Activated CD4-positive, alpha-beta T cell treated with anti-CD3 and anti-CD28 coated beads, Interleukin-2, amount 10 ng/mL, durations not matched to agents 24 days and 14 days (primary cell): ENCODE measurements at regions of chr1 and their contacts with region 1.

Region 1: GRCh38 chr1:48202030-48202752 is 20.3 kb upstream of the SLC5A9 start:
- DNase-seq: peak; percentile 85
- H3K4me3 Mint-ChIP-seq: no peak overlapping the region
- H3K27ac Mint-ChIP-seq: no peak overlapping the region
- H3K4me1 Mint-ChIP-seq: no peaks in the 10 kb centered on the region
- H3K27me3 Mint-ChIP-seq: no peaks in the 10 kb centered on the region

Region 2: DNA sequence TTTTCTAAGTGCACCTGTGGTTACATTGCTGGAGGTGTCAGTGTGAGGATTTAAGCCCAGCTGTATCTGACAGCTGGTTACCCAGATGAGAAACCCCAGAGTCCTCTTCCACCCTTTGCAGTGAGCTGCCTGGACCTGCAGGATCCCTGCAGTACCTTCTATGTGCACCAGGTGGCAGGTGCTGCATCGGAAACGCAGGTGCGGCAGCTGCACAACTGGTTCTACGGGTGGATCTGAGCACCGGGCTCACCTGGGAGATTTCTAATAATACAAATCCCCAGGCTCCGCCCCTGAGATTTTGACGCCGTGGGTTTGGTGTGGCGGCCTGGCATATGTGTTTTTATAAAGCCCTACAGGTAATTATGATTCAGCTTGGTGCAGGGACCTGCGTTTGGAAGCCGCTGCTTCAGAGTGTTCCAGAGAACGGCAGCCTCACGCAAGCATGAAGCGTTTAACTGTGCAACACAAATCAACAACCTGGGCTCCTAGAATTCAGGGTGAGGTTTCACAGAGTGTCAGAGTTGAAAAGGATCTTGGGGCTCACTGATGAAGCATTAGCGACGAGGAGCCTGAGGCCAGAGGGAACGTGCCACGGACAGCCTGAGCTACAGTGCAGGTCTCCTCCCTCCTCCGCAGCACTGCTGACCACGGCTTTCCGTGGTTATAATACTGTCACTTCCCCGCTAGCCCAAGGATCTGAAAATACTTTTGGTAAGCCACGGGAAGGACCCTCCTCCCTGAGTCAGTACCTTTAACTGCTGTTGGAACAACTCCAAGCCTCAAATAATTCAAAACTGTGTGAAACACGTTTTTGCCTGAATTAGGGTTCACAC is 108.3 kb before region 1 on chr1:
- intact Hi-C with region 1: loop called (anchors 5 kb)
- DNase-seq: peak; percentile 92
- H3K4me3 Mint-ChIP-seq: no peak overlapping the region
- H3K27ac Mint-ChIP-seq: no peak overlapping the region
- H3K4me1 Mint-ChIP-seq: peaks cover 3% of the 10 kb centered on the region
- H3K27me3 Mint-ChIP-seq: peaks cover 21% of the 10 kb centered on the region

Region 3: DNA sequence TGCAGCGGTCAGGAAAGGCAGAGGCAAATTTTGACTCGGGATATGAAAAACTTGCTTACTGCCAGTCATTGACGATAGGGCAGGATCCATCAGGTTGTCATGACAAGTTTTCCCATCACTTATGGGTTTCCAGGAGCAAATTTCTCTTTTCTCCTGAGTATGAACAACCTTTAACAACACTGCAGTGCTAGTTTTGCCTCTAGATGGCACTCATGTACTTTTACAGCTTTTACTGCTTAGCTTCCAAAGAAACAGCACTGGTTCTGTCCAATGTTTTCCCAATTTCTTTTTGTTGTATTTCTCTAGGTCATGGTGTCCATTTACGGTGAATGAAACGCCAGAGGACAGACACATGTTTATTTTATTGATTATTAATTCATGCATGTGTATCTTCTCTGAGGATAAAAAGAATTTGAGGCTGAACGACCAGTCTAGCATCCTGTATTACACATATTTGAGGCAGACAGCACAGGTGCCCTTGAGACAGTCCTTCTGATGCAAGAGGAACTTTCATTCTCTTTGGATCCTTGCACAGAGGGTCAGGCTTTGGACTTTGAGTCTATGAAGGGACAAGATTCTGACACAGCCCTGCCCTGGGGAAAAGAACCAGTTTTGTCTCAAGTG is 92.7 kb before region 1 on chr1:
- intact Hi-C with region 1: loop called (anchors 1 kb)
- DNase-seq: peak; percentile 68
- H3K4me3 Mint-ChIP-seq: no peak overlapping the region
- H3K27ac Mint-ChIP-seq: no peak overlapping the region
- H3K4me1 Mint-ChIP-seq: no peaks in the 10 kb centered on the region
- H3K27me3 Mint-ChIP-seq: peaks cover 13% of the 10 kb centered on the region

Region 4: DNA sequence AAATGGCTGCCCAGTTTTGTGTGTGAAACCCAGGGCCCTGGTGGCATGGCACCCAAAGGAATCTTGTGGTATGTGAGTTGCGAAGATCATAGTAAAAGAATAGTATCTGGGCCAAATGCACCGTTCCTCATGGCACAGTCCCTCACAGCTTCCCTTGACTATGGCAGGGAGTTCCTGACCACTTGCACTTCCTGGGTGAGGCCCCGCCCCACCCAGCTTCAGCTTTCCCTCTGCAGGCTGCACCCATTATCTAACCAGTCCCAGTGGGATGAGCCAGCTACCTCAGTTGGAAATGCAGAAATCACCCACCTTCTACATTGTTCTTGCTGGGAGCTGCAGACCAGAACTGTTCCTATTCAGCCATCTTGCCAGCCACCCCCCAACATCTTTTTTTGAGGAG is 83.3 kb after region 1 on chr1:
- intact Hi-C with region 1: no loop called
- DNase-seq: no peak
- H3K4me3 Mint-ChIP-seq: no peak overlapping the region
- H3K27ac Mint-ChIP-seq: no peak overlapping the region
- H3K4me1 Mint-ChIP-seq: no peaks in the 10 kb centered on the region
- H3K27me3 Mint-ChIP-seq: no peaks in the 10 kb centered on the region